ENCODE measurements at regions of chr1 and their contacts with region 1.

Region 1: GRCh38 chr1:44867801-44868200 is 24.7 kb upstream of the PTCH2 start:
- DNase-seq: no peak
- H3K4me3 ChIP-seq: no peak overlapping the region
- CTCF ChIP-seq: no peak
- POLR2A ChIP-seq: no peak

Region 2: DNA sequence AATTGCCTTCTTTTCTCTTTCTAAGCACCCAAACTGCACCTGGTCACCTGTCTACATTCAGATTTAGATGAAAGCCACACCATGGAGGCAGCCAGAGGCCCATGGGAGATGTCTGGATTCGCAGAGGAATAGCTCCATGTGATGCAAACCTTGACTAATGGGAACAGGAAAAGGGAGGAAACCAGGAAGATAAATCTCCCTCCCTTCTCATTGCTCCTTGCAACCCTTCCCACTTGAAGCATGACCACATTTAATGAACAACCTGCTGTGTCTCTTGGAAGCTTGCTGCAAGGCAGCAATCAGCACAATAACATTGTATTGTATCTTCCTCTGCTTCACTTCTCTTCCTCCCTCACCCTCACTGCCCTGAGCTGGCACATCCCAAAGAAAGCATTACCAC is 791.7 kb before region 1 on chr1:
- intact Hi-C with region 1: loop called (anchors 5 kb)
- DNase-seq: no peak
- H3K4me3 ChIP-seq: no peak overlapping the region
- CTCF ChIP-seq: no peak
- POLR2A ChIP-seq: no peak

Region 3: GRCh38 chr1:45654540-45655280 is 786.9 kb after region 1 on chr1:
- intact Hi-C with region 1: loop called (anchors 5 kb)
- DNase-seq: no peak
- H3K4me3 ChIP-seq: no peak overlapping the region
- CTCF ChIP-seq: no peak
- POLR2A ChIP-seq: no peak